ENCODE measurements at regions of chr18 and their contacts with region 1.

Region 1: GRCh38 chr18:31741097-31741735 is 19.5 kb downstream of the SLC25A52 start:
- DNase-seq: peak in 1 of 4 donors; percentile 28
- ATAC-seq: peak; percentile 77
- H3K4me3 ChIP-seq: no peak overlapping the region
- H3K27ac ChIP-seq: no peak overlapping the region
- H3K4me1 ChIP-seq: no peaks in the 10 kb centered on the region
- H3K27me3 ChIP-seq: no peaks in the 10 kb centered on the region
- CTCF ChIP-seq: peak; percentile 84 to 93

Region 2: DNA sequence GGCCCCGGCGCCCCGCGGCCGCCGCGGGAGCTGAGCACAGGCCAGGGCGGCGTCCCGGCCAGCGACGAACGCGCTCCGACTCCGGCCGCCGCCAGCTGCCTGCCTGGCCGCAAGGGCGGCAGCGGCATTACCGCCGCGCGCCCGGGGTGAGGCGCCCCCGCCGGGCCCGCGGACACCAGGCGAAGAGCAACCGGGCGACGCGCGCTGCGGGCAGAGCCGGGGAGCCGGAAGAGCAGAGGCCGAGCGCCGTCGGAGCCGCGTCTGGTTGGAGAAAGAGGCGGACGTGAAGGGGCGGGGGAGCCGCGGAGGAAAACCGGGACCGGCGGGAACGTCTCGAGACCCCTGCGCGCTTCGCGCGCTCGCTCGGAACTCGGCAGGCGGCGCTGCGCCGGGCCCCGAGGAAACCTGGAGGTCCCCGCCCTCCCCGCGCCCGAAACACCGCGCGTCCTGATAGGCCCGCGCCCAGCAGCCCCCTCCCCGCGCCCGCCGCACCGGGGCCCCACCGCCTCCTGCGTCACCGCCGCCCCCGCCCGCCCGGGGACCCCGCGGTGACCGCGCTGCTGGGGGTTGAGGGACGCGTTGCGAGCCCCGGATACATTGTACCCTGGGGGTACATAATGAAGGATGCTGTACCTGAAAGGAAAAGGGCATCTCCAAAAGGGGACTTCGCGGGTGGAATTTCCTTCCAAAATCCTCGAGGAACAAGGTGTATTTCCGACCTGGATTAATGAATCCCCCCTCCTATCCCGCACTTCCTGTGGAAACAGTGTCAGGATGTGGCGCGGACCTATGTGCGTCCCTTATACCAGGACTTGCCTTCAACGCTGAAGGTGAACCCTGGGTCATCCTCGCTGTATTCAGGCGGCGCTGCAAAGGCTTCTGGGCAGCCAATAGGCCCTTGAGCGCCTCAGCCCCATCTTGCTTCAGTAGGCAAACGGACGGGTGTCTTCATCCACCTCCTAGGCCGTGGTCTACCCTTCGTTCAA is 55.8 kb before region 1 on chr18:
- intact Hi-C with region 1: loop called in 1 of 2 experiments (anchors 10 kb)
- DNase-seq: peak; percentile 67 to 91 (median 78)
- ATAC-seq: peak; percentile 90
- H3K4me3 ChIP-seq: peak overlapping the region; percentile 40 to 60
- H3K27ac ChIP-seq: peak overlapping the region; percentile 65 to 73
- H3K4me1 ChIP-seq: peaks cover 5 to 17% of the 10 kb centered on the region in 2 donors
- H3K27me3 ChIP-seq: peaks cover 0 to 7% of the 10 kb centered on the region in 2 donors
- CTCF ChIP-seq: peak; percentile 21 to 43

Region 3: DNA sequence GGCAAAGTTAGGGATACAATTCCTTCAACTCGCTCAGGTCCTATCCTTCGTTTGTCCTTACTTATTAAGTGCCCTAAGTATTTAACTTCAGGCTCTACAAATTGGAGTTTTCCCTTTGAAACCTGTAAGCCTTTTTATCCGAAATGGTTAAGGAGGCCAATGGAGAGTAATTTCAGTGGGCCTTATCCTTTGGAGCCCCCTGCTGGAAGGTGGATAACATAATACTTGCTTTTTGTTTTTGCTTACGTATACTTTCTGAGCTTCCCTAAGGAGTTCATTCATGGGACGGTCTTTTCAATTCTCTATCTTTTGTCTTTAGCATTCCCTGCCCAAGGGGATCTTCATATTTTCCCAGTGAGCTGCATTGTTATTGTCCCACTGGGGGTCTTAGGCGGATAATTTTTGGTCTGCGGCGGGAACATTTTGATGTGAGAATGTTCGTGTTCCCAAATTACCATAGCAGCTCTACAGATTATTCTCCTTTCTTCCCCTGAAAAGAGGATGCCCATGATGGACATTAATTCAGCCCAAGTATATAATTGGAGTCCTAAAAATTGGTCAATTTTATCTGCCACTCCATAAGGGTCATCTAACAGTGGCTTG is 236.2 kb after region 1 on chr18:
- intact Hi-C with region 1: no loop called
- DNase-seq: peak in 1 of 4 donors; percentile 20
- ATAC-seq: peak; percentile 64
- H3K4me3 ChIP-seq: no peak overlapping the region
- H3K27ac ChIP-seq: no peak overlapping the region
- H3K4me1 ChIP-seq: no peaks in the 10 kb centered on the region
- H3K27me3 ChIP-seq: no peaks in the 10 kb centered on the region
- CTCF ChIP-seq: peak; percentile 42 to 54

Region 4: DNA sequence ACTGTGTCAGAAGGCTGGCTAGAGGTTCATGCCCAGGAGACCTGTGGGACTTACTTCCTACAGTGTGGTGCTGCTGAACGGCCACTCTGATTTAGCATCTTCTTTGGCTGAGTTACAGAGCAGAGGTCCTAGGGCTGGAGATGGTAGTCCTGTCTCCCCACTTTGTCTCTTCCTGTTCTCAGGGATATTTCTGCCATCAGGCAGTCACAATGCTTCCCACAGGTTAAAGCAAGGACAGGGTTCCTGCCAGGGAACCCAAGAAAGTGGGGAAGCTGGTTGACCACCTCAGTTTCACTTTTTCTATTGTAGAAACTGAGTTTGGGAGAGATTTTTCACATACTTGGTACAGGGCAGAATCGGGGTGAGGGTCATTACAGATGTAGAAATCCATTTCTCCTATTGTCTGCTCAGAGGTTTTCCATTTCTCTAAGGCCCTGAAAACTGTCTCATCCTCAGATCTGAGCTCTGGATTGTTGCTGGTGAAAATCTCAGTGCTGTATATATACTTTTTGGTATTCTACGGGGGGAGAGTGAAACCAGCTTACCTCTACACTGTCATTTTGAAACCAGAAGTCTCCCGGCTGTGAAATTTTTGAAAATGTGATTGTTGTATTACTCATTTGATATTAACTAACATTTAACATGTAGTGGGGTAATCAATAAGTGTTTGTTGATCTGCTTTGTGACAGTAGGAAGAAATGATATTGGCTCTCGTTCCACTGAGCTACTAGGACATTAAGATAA is 411.7 kb after region 1 on chr18:
- intact Hi-C with region 1: no loop called
- DNase-seq: no peak
- ATAC-seq: no peak
- H3K4me3 ChIP-seq: no peak overlapping the region
- H3K27ac ChIP-seq: no peak overlapping the region
- H3K4me1 ChIP-seq: peaks cover 2% of the 10 kb centered on the region in 2 donors
- H3K27me3 ChIP-seq: no peaks in the 10 kb centered on the region
- CTCF ChIP-seq: no peak